Activated CD4-positive, alpha-beta memory T cell treated with anti-CD3 and anti-CD28 coated beads for 36 hours (primary cell): ENCODE measurements at regions of chr11 and their contacts with region 1.

Region 1: GRCh38 chr11:130069684-130070108 is at the start of gene APLP2:
- DNase-seq: peak; percentile 98
- H3K4me3 Mint-ChIP-seq: peak within 1 kb of the TSS; percentile 93
- H3K27ac Mint-ChIP-seq: peak within 1 kb of the TSS; percentile 87
- H3K4me1 Mint-ChIP-seq: peaks cover 16% of the 10 kb centered on the region
- H3K27me3 Mint-ChIP-seq: peaks cover 3% of the 10 kb centered on the region
- total RNA-seq, gene APLP2: 49.2 to 53.4 TPM

Region 2: GRCh38 chr11:129815596-129816461 is 253.9 kb before region 1 on chr11 and contains the start of gene TMEM45B:
- CTCF ChIA-PET with region 1: no interaction called
- POLR2A ChIA-PET with region 1: no interaction called
- intact Hi-C with region 1: loop called (anchors 2 kb)
- DNase-seq: peak; percentile 62
- H3K4me3 Mint-ChIP-seq: peak within 1 kb of the TSS; percentile 87
- H3K27ac Mint-ChIP-seq: peak within 1 kb of the TSS; percentile 78
- H3K4me1 Mint-ChIP-seq: peaks cover 54% of the 10 kb centered on the region
- H3K27me3 Mint-ChIP-seq: peaks cover 2% of the 10 kb centered on the region
- total RNA-seq, gene TMEM45B: 4.9 to 5.8 TPM

Region 3: GRCh38 chr11:129922674-129923073 is 147.0 kb before region 1 on chr11:
- CTCF ChIA-PET with region 1: interaction called, 4 read pairs
- POLR2A ChIA-PET with region 1: no interaction called
- intact Hi-C with region 1: loop called (anchors 2 kb)
- DNase-seq: no peak
- H3K4me3 Mint-ChIP-seq: no peak overlapping the region
- H3K27ac Mint-ChIP-seq: no peak overlapping the region
- H3K4me1 Mint-ChIP-seq: peaks cover 6% of the 10 kb centered on the region
- H3K27me3 Mint-ChIP-seq: no peaks in the 10 kb centered on the region

Region 4: GRCh38 chr11:130118636-130119387 is 49.1 kb after region 1 on chr11:
- CTCF ChIA-PET with region 1: interaction called, 7 read pairs
- POLR2A ChIA-PET with region 1: no interaction called
- intact Hi-C with region 1: loop called (anchors 2 kb)
- DNase-seq: peak; percentile 31
- H3K4me3 Mint-ChIP-seq: no peak overlapping the region
- H3K27ac Mint-ChIP-seq: no peak overlapping the region
- H3K4me1 Mint-ChIP-seq: peaks cover 41% of the 10 kb centered on the region
- H3K27me3 Mint-ChIP-seq: peaks cover 1% of the 10 kb centered on the region